CD4-positive, alpha-beta T cell (primary cell): ENCODE measurements at regions of chr3 and their contacts with region 1.

Region 1: GRCh38 chr3:194682694-194683310 is 2.9 kb upstream of the FAM43A start:
- DNase-seq: peak; percentile 43 to 86 (median 53)
- ATAC-seq: peak; percentile 81
- H3K4me3 ChIP-seq: no peak overlapping the region
- H3K4me3 Mint-ChIP-seq: peak overlapping the region; percentile 13
- H3K27ac ChIP-seq: no peak overlapping the region
- H3K27ac Mint-ChIP-seq: no peak overlapping the region
- H3K4me1 ChIP-seq: peaks cover 43% of the 10 kb centered on the region
- H3K4me1 Mint-ChIP-seq: peaks cover 34% of the 10 kb centered on the region
- H3K27me3 ChIP-seq: no peaks in the 10 kb centered on the region
- H3K27me3 Mint-ChIP-seq: peaks cover 14% of the 10 kb centered on the region
- CTCF ChIP-seq: peak; percentile 72

Region 2: GRCh38 chr3:194306109-194306686 is 376.6 kb before region 1 on chr3:
- CTCF ChIA-PET with region 1: no interaction called
- POLR2A ChIA-PET with region 1: no interaction called
- intact Hi-C with region 1: no loop called
- DNase-seq: peak; percentile 17 to 80 (median 48)
- ATAC-seq: peak; percentile 67
- H3K4me3 ChIP-seq: peak overlapping the region; percentile 14
- H3K4me3 Mint-ChIP-seq: peak overlapping the region; percentile 56
- H3K27ac ChIP-seq: no peak overlapping the region
- H3K27ac Mint-ChIP-seq: peak overlapping the region; percentile 85
- H3K4me1 ChIP-seq: peaks cover 47% of the 10 kb centered on the region
- H3K4me1 Mint-ChIP-seq: peaks cover 38% of the 10 kb centered on the region
- H3K27me3 ChIP-seq: no peaks in the 10 kb centered on the region
- H3K27me3 Mint-ChIP-seq: no peaks in the 10 kb centered on the region
- CTCF ChIP-seq: no peak

Region 3: GRCh38 chr3:194654443-194654842 is 28.4 kb before region 1 on chr3:
- CTCF ChIA-PET with region 1: no interaction called
- POLR2A ChIA-PET with region 1: no interaction called
- intact Hi-C with region 1: loop called in 1 of 2 experiments (anchors 1 kb)
- DNase-seq: no peak
- ATAC-seq: no peak
- H3K4me3 ChIP-seq: no peak overlapping the region
- H3K4me3 Mint-ChIP-seq: no peak overlapping the region
- H3K27ac ChIP-seq: no peak overlapping the region
- H3K27ac Mint-ChIP-seq: no peak overlapping the region
- H3K4me1 ChIP-seq: no peaks in the 10 kb centered on the region
- H3K4me1 Mint-ChIP-seq: peaks cover 10% of the 10 kb centered on the region
- H3K27me3 ChIP-seq: no peaks in the 10 kb centered on the region
- H3K27me3 Mint-ChIP-seq: no peaks in the 10 kb centered on the region
- CTCF ChIP-seq: no peak

Region 4: DNA sequence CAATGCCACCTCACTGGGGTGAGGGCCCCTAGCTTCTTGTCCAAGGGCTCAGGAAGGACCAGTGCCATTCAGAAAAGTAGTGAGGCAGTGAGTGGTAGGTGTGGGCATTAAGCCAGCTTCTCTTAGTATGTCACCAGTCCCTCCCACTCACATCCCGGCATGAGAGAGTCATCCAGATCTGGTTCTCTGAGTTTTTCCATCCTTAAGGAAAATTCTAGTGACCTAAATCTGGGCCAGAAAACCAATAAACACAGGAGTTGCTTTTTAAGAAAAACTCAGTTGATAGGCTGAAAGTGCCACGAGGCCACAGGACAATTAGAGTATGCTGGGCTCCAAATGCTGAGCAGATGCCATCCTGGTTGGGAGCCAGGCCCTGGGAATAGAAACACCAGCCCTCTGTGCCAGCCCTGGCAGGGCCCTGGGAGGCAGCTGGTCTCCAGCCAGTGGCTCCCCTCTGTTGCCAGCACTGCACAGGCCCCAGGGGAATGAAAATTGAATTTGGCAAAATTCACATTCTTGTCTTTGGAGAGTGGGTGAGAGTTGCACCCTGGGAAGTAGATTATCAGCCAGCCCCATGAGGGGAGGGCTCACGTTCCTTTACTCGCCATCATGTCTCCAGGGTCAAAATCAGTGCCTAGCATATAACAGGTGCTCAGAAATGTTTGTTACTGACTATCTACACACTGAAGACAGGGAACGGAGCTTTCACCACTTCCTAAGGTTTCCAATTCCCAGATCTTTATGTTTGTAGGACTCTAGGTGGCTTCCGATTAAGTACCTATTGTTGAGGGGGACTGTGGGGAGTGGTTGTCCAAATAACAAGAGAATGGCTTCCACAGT is 55.7 kb after region 1 on chr3:
- CTCF ChIA-PET with region 1: no interaction called
- POLR2A ChIA-PET with region 1: no interaction called
- intact Hi-C with region 1: no loop called
- DNase-seq: no peak
- ATAC-seq: no peak
- H3K4me3 ChIP-seq: no peak overlapping the region
- H3K4me3 Mint-ChIP-seq: no peak overlapping the region
- H3K27ac ChIP-seq: no peak overlapping the region
- H3K27ac Mint-ChIP-seq: no peak overlapping the region
- H3K4me1 ChIP-seq: no peaks in the 10 kb centered on the region
- H3K4me1 Mint-ChIP-seq: no peaks in the 10 kb centered on the region
- H3K27me3 ChIP-seq: peaks cover 13 to 15% of the 10 kb centered on the region in 2 experiments
- H3K27me3 Mint-ChIP-seq: peaks cover 38% of the 10 kb centered on the region
- CTCF ChIP-seq: no peak

Region 5: GRCh38 chr3:194769020-194769643 is 86.3 kb after region 1 on chr3:
- CTCF ChIA-PET with region 1: interaction called, 9 read pairs
- POLR2A ChIA-PET with region 1: interaction called, 13 read pairs
- intact Hi-C with region 1: loop called in 1 of 2 experiments (anchors 2 kb)
- DNase-seq: peak; percentile 77 to 98 (median 88)
- ATAC-seq: peak; percentile 97
- H3K4me3 ChIP-seq: peak overlapping the region; percentile 43
- H3K4me3 Mint-ChIP-seq: peak overlapping the region; percentile 87
- H3K27ac ChIP-seq: peak overlapping the region; percentile 51 to 65
- H3K27ac Mint-ChIP-seq: peak overlapping the region; percentile 84
- H3K4me1 ChIP-seq: peaks cover 16% of the 10 kb centered on the region
- H3K4me1 Mint-ChIP-seq: peaks cover 22% of the 10 kb centered on the region
- H3K27me3 ChIP-seq: no peaks in the 10 kb centered on the region
- H3K27me3 Mint-ChIP-seq: peaks cover 5% of the 10 kb centered on the region
- CTCF ChIP-seq: no peak

Region 6: GRCh38 chr3:195106418-195106906 is 423.7 kb after region 1 on chr3:
- CTCF ChIA-PET with region 1: interaction called, 19 read pairs
- POLR2A ChIA-PET with region 1: interaction called, 5 read pairs
- intact Hi-C with region 1: loop called (anchors 1 kb)
- DNase-seq: peak; percentile 36 to 84 (median 60)
- ATAC-seq: peak; percentile 92
- H3K4me3 ChIP-seq: peak overlapping the region; percentile 6
- H3K4me3 Mint-ChIP-seq: no peak overlapping the region
- H3K27ac ChIP-seq: no peak overlapping the region
- H3K27ac Mint-ChIP-seq: no peak overlapping the region
- H3K4me1 ChIP-seq: peaks cover 8% of the 10 kb centered on the region
- H3K4me1 Mint-ChIP-seq: peaks cover 7% of the 10 kb centered on the region
- H3K27me3 ChIP-seq: no peaks in the 10 kb centered on the region
- H3K27me3 Mint-ChIP-seq: no peaks in the 10 kb centered on the region
- CTCF ChIP-seq: peak; percentile 99

Region 7: DNA sequence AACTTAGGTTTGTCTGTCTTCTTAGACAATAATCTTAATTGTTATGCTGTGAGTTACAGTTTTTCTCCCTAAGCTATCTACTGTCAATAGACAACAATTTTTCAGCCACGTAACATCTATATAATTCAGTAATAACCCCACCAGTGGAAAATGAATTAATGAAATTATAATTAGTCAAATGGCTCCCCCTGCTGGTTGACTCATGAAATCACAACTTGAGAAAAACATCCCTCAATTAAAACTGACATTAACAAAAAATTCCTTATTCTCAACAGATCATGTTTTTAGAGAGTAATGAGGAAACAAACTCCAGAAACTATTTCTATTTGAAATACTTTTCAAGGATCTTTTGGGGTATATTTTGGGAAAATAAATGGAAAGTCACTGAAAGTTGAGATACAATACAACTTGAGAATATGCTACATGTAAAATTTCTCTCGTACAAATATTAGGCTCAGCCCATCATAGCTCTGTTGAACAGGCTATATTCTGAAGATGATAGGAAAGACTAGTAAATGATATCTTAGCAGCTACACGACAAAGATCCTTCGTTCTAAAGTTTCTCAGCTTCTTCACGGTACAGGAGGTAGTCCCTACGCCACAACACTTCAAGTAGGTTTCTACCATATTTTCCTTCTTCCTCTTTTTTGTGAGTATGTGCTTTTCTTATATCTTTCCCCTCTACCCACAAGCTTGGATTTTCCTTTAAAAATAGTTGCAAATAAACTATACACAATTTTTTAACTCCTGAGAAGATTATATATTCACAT is 839.6 kb after region 1 on chr3:
- CTCF ChIA-PET with region 1: no interaction called
- POLR2A ChIA-PET with region 1: no interaction called
- intact Hi-C with region 1: loop called (anchors 5 kb)
- DNase-seq: peak in 4 of 14 experiments; percentile 59 to 71 (median 63)
- ATAC-seq: peak; percentile 34
- H3K4me3 ChIP-seq: no peak overlapping the region
- H3K4me3 Mint-ChIP-seq: no peak overlapping the region
- H3K27ac ChIP-seq: no peak overlapping the region
- H3K27ac Mint-ChIP-seq: peak overlapping the region; percentile 82
- H3K4me1 ChIP-seq: peaks cover 28% of the 10 kb centered on the region
- H3K4me1 Mint-ChIP-seq: peaks cover 59% of the 10 kb centered on the region
- H3K27me3 ChIP-seq: no peaks in the 10 kb centered on the region
- H3K27me3 Mint-ChIP-seq: no peaks in the 10 kb centered on the region
- CTCF ChIP-seq: peak; percentile 93